Left lung (tissue), 14 donors: ENCODE measurements at regions of chr6 and their contacts with region 1.

Region 1: DNA sequence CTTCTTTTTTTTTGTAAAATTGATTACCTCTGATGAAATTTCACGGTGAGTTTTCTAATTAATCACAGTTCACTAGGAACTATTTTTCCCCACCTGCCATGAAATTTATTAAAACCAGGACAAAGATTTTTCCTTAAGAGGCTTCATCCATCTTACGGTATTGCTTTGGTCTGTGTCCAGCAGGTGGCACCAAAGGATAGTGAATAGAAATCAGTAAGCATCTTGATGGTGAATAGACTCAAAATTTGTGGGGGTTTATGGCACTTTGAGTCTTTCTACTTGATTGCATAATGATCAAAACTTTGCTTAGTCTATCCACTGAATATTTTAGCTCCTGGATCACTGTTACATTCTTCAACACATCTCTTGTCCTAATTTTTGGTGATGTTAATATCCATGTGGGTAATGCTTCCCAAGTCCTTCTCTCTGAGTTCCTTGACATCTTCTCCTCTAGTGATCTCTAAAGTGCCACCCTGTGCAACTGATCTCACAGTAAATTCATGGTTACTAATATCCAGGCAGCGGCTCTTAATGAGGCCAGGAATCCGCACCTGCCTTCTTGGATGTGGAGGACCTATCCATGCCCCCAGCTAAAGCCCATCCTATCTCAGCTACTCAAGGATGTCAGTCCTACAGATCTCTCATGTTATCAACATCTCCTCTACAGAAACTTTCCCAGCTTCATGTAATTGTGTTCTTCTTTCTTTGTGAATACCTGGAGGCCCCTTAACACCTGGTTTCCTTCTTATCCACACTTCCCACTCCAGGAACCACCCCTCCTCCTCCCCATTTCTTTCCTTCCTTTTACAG is 54.5 kb downstream of the STMND1 start:
- DNase-seq: peak in 2 of 4 donors; percentile 75 to 87
- ATAC-seq: peak; percentile 86
- H3K4me3 ChIP-seq: no peak overlapping the region
- H3K27ac ChIP-seq: no peak overlapping the region
- H3K4me1 ChIP-seq: no peaks in the 10 kb centered on the region
- H3K27me3 ChIP-seq: peaks cover 0 to 4% of the 10 kb centered on the region in 2 donors
- CTCF ChIP-seq: peak; percentile 58 to 77

Region 2: DNA sequence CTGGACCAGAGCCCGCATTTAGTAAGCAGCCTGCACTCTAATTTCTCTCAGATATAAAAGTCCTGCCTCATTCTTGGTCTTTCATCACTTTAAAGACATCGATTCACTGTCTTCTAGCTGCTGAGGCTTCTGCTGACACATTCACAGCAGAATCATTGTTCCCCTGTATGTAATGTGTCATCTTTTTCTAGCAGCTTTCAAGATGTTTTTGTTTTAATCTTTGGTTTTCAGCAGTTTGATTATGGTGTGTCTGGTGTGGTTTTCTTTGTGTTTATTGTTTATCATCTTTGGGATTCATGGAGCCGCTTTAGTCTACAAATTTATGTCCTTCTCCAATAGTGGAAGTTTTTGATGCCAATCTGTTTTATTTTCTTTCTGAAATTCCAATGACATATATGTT is 211.7 kb before region 1 on chr6:
- intact Hi-C with region 1: no loop called
- DNase-seq: no peak
- ATAC-seq: no peak
- H3K4me3 ChIP-seq: no peak overlapping the region
- H3K27ac ChIP-seq: no peak overlapping the region
- H3K4me1 ChIP-seq: no peaks in the 10 kb centered on the region
- H3K27me3 ChIP-seq: no peaks in the 10 kb centered on the region
- CTCF ChIP-seq: no peak

Region 3: GRCh38 chr6:16985513-16986284 is 170.6 kb before region 1 on chr6:
- intact Hi-C with region 1: no loop called
- DNase-seq: peak in 2 of 4 donors; percentile 47 to 72
- ATAC-seq: peak; percentile 72
- H3K4me3 ChIP-seq: no peak overlapping the region
- H3K27ac ChIP-seq: peak overlapping the region in 1 of 2 donors; percentile 47
- H3K4me1 ChIP-seq: no peaks in the 10 kb centered on the region
- H3K27me3 ChIP-seq: no peaks in the 10 kb centered on the region
- CTCF ChIP-seq: no peak

Region 4: GRCh38 chr6:17584241-17584803 is 428.0 kb after region 1 on chr6:
- intact Hi-C with region 1: loop called in 1 of 2 experiments (anchors 5 kb)
- DNase-seq: peak in 2 of 4 donors; percentile 68 to 81
- ATAC-seq: peak; percentile 82
- H3K4me3 ChIP-seq: no peak overlapping the region
- H3K27ac ChIP-seq: peak overlapping the region in 1 of 2 donors; percentile 38
- H3K4me1 ChIP-seq: peaks cover 2 to 27% of the 10 kb centered on the region in 2 donors
- H3K27me3 ChIP-seq: peaks cover 0 to 17% of the 10 kb centered on the region in 2 donors
- CTCF ChIP-seq: peak; percentile 57 to 73

Region 5: GRCh38 chr6:17808609-17809008 is 652.3 kb after region 1 on chr6:
- intact Hi-C with region 1: loop called in 1 of 2 experiments (anchors 10 kb)
- DNase-seq: no peak
- ATAC-seq: peak; percentile 70
- H3K4me3 ChIP-seq: no peak overlapping the region
- H3K27ac ChIP-seq: no peak overlapping the region
- H3K4me1 ChIP-seq: no peaks in the 10 kb centered on the region
- H3K27me3 ChIP-seq: no peaks in the 10 kb centered on the region
- CTCF ChIP-seq: no peak